Activated T-helper 1 cell treated with anti-CD3 and anti-CD28 coated beads, Interleukin-12 subunit alpha, Interleukin-12 subunit beta, Interleukin-2, Interleukin-4 antibody, amounts not matched to agents 30 ng/mL and 10 ng/mL and 1 ng/mL, durations not matched to agents 14 hours and 24 hours and 36 hours (primary cell): ENCODE measurements at regions of chr15 and their contacts with region 1.

Region 1: DNA sequence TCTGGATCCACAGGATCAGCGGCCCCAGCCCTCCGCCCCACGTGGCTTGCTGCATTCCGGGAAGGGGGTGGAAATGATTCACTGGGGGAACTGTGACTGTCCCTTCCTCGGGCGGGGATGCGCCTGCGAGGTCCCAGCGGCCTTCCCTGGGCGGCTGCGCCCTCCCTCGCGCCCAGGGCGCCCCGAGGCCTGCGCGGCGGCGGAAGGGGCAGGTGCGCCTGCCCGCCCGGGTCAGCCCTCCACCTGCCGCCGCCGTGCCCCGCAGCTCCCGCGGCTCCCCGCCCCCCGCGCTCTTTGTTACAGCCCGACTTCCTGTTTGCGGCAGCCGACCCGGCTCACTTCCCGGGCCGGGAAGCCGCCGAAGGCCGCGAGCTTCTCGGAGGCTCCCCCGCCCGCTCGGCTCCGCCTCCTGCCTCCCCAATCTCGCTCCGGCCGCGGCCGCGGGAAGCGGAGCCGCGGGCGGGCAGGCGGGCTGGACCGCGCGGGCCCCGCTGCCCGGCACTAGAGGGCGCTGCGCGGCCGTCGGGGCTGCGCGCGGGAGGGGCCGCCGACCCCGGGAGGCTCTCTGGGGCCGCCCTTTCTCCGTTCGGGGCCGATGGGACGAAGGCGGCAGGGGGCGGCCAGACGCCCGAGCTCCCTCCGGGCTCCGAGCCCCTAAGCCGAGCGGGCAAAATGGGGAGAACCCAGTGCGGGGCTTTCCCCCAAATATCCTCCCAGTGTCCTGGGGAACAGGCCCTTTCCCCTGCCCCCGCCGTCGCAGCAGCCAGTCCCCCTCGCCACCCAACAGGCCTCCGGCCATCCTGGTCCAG is 11.5 kb upstream of the CHAC1 start:
- DNase-seq: peak; percentile 66
- H3K4me3 Mint-ChIP-seq: peak overlapping the region; percentile 77
- H3K27ac Mint-ChIP-seq: peak overlapping the region; percentile 72
- H3K4me1 Mint-ChIP-seq: peaks cover 23% of the 10 kb centered on the region
- H3K27me3 Mint-ChIP-seq: peaks cover 4% of the 10 kb centered on the region

Region 2: GRCh38 chr15:40906091-40906990 is 35.4 kb before region 1 on chr15:
- intact Hi-C with region 1: loop called (anchors 5 kb)
- DNase-seq: peak; percentile 55
- H3K4me3 Mint-ChIP-seq: no peak overlapping the region
- H3K27ac Mint-ChIP-seq: no peak overlapping the region
- H3K4me1 Mint-ChIP-seq: peaks cover 21% of the 10 kb centered on the region
- H3K27me3 Mint-ChIP-seq: no peaks in the 10 kb centered on the region

Region 3: GRCh38 chr15:40928821-40929659 is 12.7 kb before region 1 on chr15 and contains the start of gene DLL4:
- intact Hi-C with region 1: loop called (anchors 1 kb)
- DNase-seq: no peak
- H3K4me3 Mint-ChIP-seq: peak within 1 kb of the TSS; percentile 74
- H3K27ac Mint-ChIP-seq: peak within 1 kb of the TSS; percentile 65
- H3K4me1 Mint-ChIP-seq: peaks cover 45% of the 10 kb centered on the region
- H3K27me3 Mint-ChIP-seq: peaks cover 66% of the 10 kb centered on the region
- total RNA-seq, gene DLL4: 0.29 and 0.36 TPM in 2 replicates

Region 4: DNA sequence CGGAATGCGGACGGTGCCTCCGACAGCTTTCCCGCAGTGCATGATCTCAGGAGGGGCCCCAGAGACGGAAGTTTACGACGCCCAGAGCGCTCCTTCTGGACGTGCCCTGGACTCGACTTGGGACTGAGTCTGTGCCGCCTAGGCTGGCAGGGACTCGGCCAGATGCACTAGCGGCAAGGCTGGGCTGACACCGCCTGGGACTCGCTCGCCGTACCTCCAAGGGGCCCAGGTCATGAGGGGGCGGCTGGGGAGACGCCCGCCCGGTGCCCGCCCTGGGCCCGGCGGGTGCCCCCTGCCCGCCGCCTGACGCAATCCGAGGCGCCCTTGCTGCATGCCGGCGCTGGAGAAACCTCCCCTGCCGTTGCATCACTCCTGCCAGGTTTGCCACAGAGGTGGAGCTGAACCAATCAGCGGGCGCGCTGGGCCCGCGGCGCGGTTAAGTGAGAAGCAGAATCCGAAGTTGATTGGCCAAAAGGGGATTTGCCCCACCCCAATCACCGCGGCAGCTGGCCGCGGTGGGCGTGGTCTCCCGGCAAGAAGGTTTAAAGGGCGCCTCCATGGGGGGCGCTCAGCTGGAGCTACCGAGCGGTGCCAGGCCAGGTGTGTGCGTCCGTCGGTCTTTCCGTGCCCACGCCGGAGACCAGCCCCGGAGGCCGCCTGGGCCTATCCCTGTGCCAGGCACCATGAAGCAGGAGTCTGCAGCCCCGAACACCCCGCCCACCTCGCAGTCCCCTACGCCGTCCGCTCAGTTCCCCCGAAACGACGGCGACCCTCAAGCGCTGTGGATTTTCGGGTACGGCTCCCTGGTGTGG is 11.4 kb after region 1 on chr15 and contains the start of gene CHAC1:
- intact Hi-C with region 1: loop called (anchors 1 kb)
- DNase-seq: peak; percentile 96
- H3K4me3 Mint-ChIP-seq: peak within 1 kb of the TSS; percentile 92
- H3K27ac Mint-ChIP-seq: peak within 1 kb of the TSS; percentile 89
- H3K4me1 Mint-ChIP-seq: peaks cover 48% of the 10 kb centered on the region
- H3K27me3 Mint-ChIP-seq: no peaks in the 10 kb centered on the region
- total RNA-seq, gene CHAC1: 11.7 and 12.4 TPM in 2 replicates

Region 5: DNA sequence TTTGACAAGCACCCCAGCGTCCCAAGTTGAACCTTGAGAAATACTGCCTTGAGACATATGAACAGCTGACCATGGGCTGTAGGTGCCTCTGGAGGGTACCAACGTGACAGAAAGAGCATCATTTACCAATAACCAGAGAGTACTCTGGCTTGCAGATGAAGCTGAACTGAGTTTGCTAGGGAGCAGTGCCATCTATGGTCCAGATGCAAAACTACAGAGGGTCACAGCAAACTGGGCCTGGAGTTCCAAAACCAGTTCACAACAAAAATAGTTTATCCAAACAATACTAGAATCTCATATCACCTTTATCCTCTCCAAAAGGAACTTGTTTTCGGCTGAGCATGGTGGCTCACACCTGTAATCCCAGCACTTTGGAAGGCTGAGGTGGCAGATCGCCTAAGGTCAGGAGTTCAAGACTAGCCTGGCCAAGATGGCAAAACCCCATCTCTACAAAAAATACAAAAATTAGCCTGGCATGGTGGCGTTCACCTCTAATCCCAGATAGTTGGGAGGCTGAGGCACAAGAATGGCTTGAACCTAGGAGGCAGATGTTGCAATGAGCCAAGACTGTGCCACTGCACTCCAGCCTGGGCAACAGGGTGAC is 80.9 kb after region 1 on chr15:
- intact Hi-C with region 1: loop called (anchors 1 kb)
- DNase-seq: peak; percentile 16
- H3K4me3 Mint-ChIP-seq: no peak overlapping the region
- H3K27ac Mint-ChIP-seq: no peak overlapping the region
- H3K4me1 Mint-ChIP-seq: peaks cover 13% of the 10 kb centered on the region
- H3K27me3 Mint-ChIP-seq: no peaks in the 10 kb centered on the region

Region 6: DNA sequence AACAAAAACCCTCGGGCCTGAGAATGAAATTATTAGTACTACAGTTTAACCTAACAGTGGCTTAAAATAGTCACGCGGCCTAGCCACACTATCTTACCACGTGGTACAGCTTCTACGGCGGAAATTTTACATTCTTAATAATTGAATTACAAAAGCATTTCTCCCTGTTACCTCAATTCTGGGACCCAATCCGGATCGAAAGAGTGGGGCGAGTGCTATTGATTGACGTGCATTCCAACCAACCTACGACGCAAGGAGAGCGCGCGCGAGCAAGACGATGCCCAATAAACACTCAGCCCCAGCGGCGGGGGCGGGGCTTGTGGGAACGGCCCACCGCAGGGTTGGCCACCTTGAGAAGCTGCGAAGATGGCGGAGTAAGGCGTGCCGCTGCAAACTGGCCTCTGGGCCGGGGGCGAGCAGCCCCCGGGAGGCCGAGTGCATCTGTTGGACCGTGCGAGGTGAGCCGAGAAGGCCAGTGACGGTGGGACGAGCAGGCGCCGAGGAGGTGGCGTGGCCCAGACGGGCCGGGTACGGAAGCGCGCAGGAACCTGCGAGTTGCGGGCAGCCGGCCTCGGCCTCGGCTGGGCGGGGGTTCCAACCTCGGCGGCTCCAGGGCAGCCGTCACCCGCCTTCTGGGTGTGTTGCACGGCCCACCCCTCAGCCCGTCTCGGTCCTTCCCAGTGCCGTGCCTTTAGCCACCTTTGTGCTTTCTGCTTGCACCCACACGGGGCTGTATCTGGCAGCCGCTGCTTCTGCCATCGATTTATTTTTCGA is 342.1 kb after region 1 on chr15:
- intact Hi-C with region 1: loop called (anchors 5 kb)
- DNase-seq: peak; percentile 96
- H3K4me3 Mint-ChIP-seq: peak overlapping the region; percentile 97
- H3K27ac Mint-ChIP-seq: peak overlapping the region; percentile 92
- H3K4me1 Mint-ChIP-seq: peaks cover 51% of the 10 kb centered on the region
- H3K27me3 Mint-ChIP-seq: no peaks in the 10 kb centered on the region